HepG2 (cell line): ENCODE measurements at regions of chr13 and their contacts with region 1.

Region 1: GRCh38 chr13:23510979-23511735 is 59.1 kb upstream of the TNFRSF19 start:
- DNase-seq: peak; percentile 62
- ATAC-seq: peak; percentile 80
- H3K4me3 ChIP-seq: no peak overlapping the region
- H3K27ac ChIP-seq: no peak overlapping the region
- H3K4me1 ChIP-seq: peaks cover 2% of the 10 kb centered on the region
- H3K27me3 ChIP-seq: no peaks in the 10 kb centered on the region
- CTCF ChIP-seq: peak; percentile 72
- EP300 ChIP-seq: no peak
- POLR2A ChIP-seq: no peak
- RAD21 ChIP-seq: peak; percentile 53

Region 2: GRCh38 chr13:23339225-23339624 is 171.9 kb before region 1 on chr13:
- CTCF ChIA-PET with region 1: no interaction called
- POLR2A ChIA-PET with region 1: no interaction called
- in situ Hi-C with region 1: no loop called
- intact Hi-C with region 1: no loop called
- DNase-seq: no peak
- ATAC-seq: no peak
- H3K4me3 ChIP-seq: no peak overlapping the region
- H3K27ac ChIP-seq: no peak overlapping the region
- H3K4me1 ChIP-seq: peaks cover 11% of the 10 kb centered on the region
- H3K27me3 ChIP-seq: no peaks in the 10 kb centered on the region
- CTCF ChIP-seq: no peak
- EP300 ChIP-seq: no peak
- POLR2A ChIP-seq: no peak
- RAD21 ChIP-seq: no peak

Region 3: DNA sequence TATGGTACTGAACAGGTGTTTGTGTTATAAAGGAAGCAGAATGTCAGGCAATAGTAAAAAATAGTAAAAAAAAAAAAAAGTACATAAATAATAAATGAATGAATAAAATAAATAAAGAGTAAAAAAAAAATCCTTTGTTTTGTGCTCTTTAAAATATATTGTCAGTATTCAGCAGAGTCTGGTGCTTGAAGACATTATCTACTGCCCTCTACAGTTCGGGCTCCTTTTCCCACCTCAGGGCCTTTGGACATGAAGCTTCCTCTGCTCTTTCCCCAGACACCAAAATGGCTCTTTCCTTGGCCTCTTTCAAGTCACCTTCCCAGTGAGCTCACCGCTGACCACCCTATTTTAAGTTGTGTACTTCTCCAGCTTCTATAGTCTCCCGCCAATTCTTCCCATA is 196.5 kb after region 1 on chr13:
- CTCF ChIA-PET with region 1: no interaction called
- POLR2A ChIA-PET with region 1: no interaction called
- in situ Hi-C with region 1: no loop called
- intact Hi-C with region 1: loop called (anchors 2 kb)
- DNase-seq: no peak
- ATAC-seq: peak; percentile 45; the same call in 2 of the 3 replicates
- H3K4me3 ChIP-seq: no peak overlapping the region
- H3K27ac ChIP-seq: no peak overlapping the region
- H3K4me1 ChIP-seq: peaks cover 20% of the 10 kb centered on the region
- H3K27me3 ChIP-seq: no peaks in the 10 kb centered on the region
- CTCF ChIP-seq: peak; percentile 42; the same call in 1 of the 2 replicates
- EP300 ChIP-seq: no peak
- POLR2A ChIP-seq: no peak
- RAD21 ChIP-seq: no peak